HEK293 (cell line): ENCODE measurements at regions of chr15 and their contacts with region 1.

Region 1: GRCh38 chr15:78565097-78565951 is at the start of gene CHRNA5:
- H3K4me3 ChIP-seq: peak within 1 kb of the TSS; percentile 57
- H3K27ac ChIP-seq: peak within 1 kb of the TSS; percentile 93
- H3K4me1 ChIP-seq: peaks cover 4% of the 10 kb centered on the region; the same call in 1 of the 2 replicates
- CTCF ChIP-seq: no peak

Region 2: DNA sequence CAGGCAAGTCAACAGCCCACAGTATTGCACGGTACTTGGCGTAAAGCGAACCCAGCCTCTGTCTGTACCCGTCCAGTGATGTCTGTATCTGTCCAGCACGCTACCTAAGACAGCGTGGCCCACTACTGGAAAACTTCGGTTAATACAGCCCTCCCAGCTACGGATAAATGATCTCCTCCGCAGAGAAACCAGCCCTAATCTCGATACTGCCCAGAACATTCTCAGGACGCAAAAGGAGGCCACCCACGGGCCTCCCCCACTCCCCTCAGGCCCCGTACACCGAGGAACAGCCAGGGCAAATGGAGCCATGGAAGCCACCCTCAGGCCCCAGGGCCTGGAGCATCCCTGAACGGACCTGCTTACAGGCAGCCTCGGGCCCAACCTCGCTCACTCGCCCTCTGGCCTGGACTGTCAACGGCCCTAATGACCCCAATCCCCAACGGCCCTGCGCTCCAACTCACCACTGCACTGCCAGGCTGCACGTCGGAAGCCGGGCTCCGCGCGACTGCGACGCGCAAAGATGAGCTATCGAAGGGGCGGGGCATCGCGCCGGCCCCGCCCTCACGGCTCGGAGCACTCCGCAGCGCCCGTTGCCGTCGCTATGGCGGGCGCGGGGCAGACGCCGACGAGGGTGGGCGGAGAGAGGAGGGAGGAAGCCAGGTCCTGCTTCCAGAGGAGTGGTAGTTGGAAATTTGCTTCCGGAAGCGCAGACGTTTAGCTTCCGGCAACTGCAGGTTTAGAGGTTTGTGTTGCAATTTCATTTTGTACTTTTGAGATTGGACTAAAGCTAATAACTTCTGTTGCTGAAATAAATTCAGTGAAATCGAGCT is 266.0 kb before region 1 on chr15 and contains the start of gene SKIC8:
- CTCF ChIA-PET with region 1: no interaction called
- POLR2A ChIA-PET with region 1: interaction called, 10 read pairs
- H3K4me3 ChIP-seq: peak within 1 kb of the TSS; percentile 87
- H3K27ac ChIP-seq: peak within 1 kb of the TSS; percentile 63
- H3K4me1 ChIP-seq: no peaks in the 10 kb centered on the region
- CTCF ChIP-seq: peak; percentile 56; the same call in 1 of the 2 replicates

Region 3: GRCh38 chr15:78506971-78507830 is 58.1 kb before region 1 on chr15 and contains the start of gene HYKK:
- CTCF ChIA-PET with region 1: no interaction called
- POLR2A ChIA-PET with region 1: interaction called, 16 read pairs
- H3K4me3 ChIP-seq: peak within 1 kb of the TSS; percentile 99
- H3K27ac ChIP-seq: peak within 1 kb of the TSS; percentile 14; the same call in 1 of the 2 replicates
- H3K4me1 ChIP-seq: 0 out of 2 replicates have a peak, but pooled peaks cover 4% of the 10 kb centered on the region
- CTCF ChIP-seq: peak; percentile 73

Region 4: GRCh38 chr15:78552597-78552996 is 12.7 kb before region 1 on chr15:
- CTCF ChIA-PET with region 1: no interaction called
- POLR2A ChIA-PET with region 1: interaction called, 25 read pairs
- H3K4me3 ChIP-seq: no peak overlapping the region
- H3K27ac ChIP-seq: no peak overlapping the region
- H3K4me1 ChIP-seq: no peaks in the 10 kb centered on the region
- CTCF ChIP-seq: no peak

Region 5: GRCh38 chr15:78625606-78626280 is 60.4 kb after region 1 on chr15:
- CTCF ChIA-PET with region 1: no interaction called
- POLR2A ChIA-PET with region 1: no interaction called
- H3K4me3 ChIP-seq: no peak overlapping the region
- H3K27ac ChIP-seq: no peak overlapping the region
- H3K4me1 ChIP-seq: no peaks in the 10 kb centered on the region
- CTCF ChIP-seq: no peak

Region 6: DNA sequence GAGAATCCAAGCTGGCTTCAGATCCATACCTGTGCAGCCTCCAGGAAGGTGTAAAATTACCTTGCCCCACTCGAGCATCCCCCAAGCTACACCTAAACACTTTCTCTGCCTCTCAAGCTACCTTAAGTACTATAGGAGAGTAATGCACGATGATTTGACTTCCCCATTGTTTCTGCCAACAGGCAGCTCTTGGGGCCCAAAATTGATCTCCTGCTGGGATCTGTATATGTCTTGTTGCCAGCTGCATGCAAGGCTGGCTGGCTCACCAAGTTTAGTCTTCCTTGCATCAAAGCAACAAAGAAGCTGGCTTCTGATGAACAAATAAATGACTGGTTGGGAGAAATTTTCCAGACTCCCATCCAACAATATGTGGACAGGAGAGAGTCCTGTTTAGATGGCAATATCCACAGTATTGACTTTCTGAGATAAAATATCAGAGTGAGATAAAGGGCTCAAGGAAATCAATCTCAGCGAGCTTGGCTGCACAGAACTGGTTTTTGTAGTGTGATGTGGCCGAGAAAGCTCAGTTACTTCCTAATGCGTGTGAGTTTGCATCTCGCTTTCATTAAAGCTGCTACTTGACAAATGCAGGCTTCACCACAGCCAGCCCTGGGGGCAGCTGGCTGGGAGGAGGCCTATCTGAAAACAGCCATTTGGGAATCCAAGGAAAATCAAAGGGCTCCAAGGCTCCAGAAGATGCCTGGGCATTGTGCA is 1007.5 kb after region 1 on chr15:
- CTCF ChIA-PET with region 1: no interaction called
- POLR2A ChIA-PET with region 1: no interaction called
- H3K4me3 ChIP-seq: no peak overlapping the region
- H3K27ac ChIP-seq: no peak overlapping the region
- H3K4me1 ChIP-seq: no peaks in the 10 kb centered on the region
- CTCF ChIP-seq: no peak